Heart right ventricle (tissue), 16 donors: ENCODE measurements at regions of chr5 and their contacts with region 1.

Region 1: DNA sequence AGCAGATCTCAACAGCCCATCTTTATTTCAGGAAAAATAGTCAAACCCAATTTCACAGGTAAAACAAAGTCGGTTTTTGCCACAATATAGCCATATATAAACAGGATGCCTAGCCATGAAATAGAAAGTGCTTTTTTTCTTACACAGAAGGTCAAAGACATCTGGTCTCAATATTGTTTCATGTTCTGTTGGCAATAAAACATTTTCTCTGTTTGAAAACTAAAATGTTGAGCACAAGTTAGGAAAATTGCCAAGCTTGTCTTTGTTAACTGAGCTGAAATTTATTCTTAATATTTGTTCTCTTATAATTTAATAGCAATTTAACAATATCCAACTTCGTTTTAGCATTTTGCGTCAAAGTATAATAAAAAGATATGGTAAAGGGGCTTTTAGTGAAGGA is 673.4 kb downstream of the DTWD2 start:
- DNase-seq: no peak
- ATAC-seq: no peak
- H3K4me3 ChIP-seq: no peak overlapping the region
- H3K27ac ChIP-seq: no peak overlapping the region
- H3K4me1 ChIP-seq: peaks cover 0 to 7% (median 0%) of the 10 kb centered on the region in 9 donors
- H3K27me3 ChIP-seq: no peaks in the 10 kb centered on the region
- CTCF ChIP-seq: no peak

Region 2: DNA sequence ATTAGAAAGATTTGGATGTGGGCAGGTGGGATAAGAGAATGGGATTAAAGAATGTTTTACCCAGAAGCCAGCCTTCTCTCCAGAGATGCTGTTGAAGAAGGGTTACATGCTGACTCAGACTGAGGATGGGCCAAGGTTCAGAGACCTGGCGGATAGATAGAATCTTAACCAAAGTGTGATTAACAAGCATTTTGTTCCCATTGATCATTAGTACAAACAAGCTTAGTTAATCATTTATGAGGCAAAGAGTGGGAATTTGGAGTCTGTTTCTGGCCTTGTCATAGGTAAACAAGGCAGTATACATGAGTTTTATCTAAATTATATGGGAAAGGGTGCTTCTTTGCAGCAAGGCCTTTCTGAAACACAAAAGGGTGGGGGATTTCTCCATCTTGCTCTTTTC is 694.2 kb after region 1 on chr5:
- intact Hi-C with region 1: loop called in 1 of 10 experiments (anchors 5 kb)
- DNase-seq: no peak
- ATAC-seq: no peak
- H3K4me3 ChIP-seq: no peak overlapping the region
- H3K27ac ChIP-seq: no peak overlapping the region
- H3K4me1 ChIP-seq: no peaks in the 10 kb centered on the region
- H3K27me3 ChIP-seq: no peaks in the 10 kb centered on the region
- CTCF ChIP-seq: no peak